H1 (cell line): ENCODE measurements at regions of chr11 and their contacts with region 1.

Region 1: GRCh38 chr11:90204832-90205646 is 17.8 kb downstream of the CHORDC1 start:
- DNase-seq: no peak
- H3K4me3 ChIP-seq: no peak overlapping the region
- H3K27ac ChIP-seq: no peak overlapping the region
- H3K4me1 ChIP-seq: no peaks in the 10 kb centered on the region
- H3K27me3 ChIP-seq: no peaks in the 10 kb centered on the region
- CTCF ChIP-seq: peak in 2 of 3 experiments; percentile 55 to 81; a peak in 3 of 4 replicates
- EP300 ChIP-seq: no peak
- POLR2A ChIP-seq: no peak
- RAD21 ChIP-seq: peak; percentile 64 to 79

Region 2: GRCh38 chr11:90187839-90188238 is 17.2 kb before region 1 on chr11:
- CTCF ChIA-PET with region 1: interaction called, 13 read pairs
- POLR2A ChIA-PET with region 1: no interaction called
- DNase-seq: no peak
- H3K4me3 ChIP-seq: no peak overlapping the region
- H3K27ac ChIP-seq: no peak overlapping the region
- H3K4me1 ChIP-seq: no peaks in the 10 kb centered on the region
- H3K27me3 ChIP-seq: peaks cover 0 to 1% (median 0%) of the 10 kb centered on the region in 4 experiments; a peak in 1 of 7 replicates
- CTCF ChIP-seq: no peak
- EP300 ChIP-seq: no peak
- POLR2A ChIP-seq: no peak
- RAD21 ChIP-seq: no peak

Region 3: GRCh38 chr11:90218606-90219005 is 13.6 kb after region 1 on chr11:
- CTCF ChIA-PET with region 1: interaction called, 16 read pairs
- POLR2A ChIA-PET with region 1: interaction called, 5 read pairs
- DNase-seq: no peak
- H3K4me3 ChIP-seq: peak overlapping the region in 1 of 4 experiments; percentile 25; a peak in 1 of 8 replicates
- H3K27ac ChIP-seq: no peak overlapping the region
- H3K4me1 ChIP-seq: no peaks in the 10 kb centered on the region; a peak in 4 of 7 replicates
- H3K27me3 ChIP-seq: peaks cover 0 to 1% (median 0%) of the 10 kb centered on the region in 4 experiments; a peak in 1 of 7 replicates
- CTCF ChIP-seq: peak in 2 of 3 experiments; percentile 16 to 26; a peak in 3 of 4 replicates
- EP300 ChIP-seq: no peak
- POLR2A ChIP-seq: no peak
- RAD21 ChIP-seq: peak; percentile 20 to 42; a peak in 3 of 4 replicates

Region 4: GRCh38 chr11:90235526-90235925 is 30.5 kb after region 1 on chr11:
- CTCF ChIA-PET with region 1: interaction called, 13 read pairs
- POLR2A ChIA-PET with region 1: no interaction called
- DNase-seq: no peak
- H3K4me3 ChIP-seq: no peak overlapping the region
- H3K27ac ChIP-seq: no peak overlapping the region
- H3K4me1 ChIP-seq: peaks cover 0 to 3% (median 3%) of the 10 kb centered on the region in 4 experiments; a peak in 3 of 7 replicates
- H3K27me3 ChIP-seq: no peaks in the 10 kb centered on the region
- CTCF ChIP-seq: no peak
- EP300 ChIP-seq: no peak
- POLR2A ChIP-seq: no peak
- RAD21 ChIP-seq: no peak